Psoas muscle (tissue), 8 donors: ENCODE measurements at regions of chr1 and their contacts with region 1.

Region 1: DNA sequence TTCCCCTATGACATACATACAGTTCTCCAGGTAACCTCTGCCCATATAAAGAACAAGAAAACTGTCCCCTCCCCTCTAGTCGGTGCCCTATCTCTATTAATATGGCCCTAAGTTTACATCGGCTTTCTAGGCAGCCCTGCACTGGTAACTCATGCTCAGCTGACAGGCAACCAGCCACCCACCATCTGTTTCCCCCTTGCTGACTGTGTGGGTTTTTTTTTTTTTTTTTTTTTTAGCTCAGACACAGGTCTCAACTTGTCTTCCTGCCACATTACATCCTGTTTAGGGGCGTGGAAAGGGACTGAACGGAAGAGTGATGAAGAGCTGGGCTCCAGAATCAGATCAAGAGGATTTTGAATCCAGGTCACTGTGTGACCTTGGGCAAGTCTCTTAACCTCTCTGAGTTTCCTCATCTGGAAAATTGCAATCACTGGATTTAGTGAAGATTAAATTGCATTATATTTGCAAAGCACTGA is 14.0 kb downstream of the LAPTM5 start:
- DNase-seq: no peak
- ATAC-seq: peak in 1 of 4 donors; percentile 27
- H3K4me3 ChIP-seq: no peak overlapping the region
- H3K27ac ChIP-seq: no peak overlapping the region
- H3K4me1 ChIP-seq: no peaks in the 10 kb centered on the region
- H3K27me3 ChIP-seq: no peaks in the 10 kb centered on the region
- CTCF ChIP-seq: no peak

Region 2: GRCh38 chr1:30763651-30764248 is 20.1 kb after region 1 on chr1:
- intact Hi-C with region 1: loop called in 1 of 2 experiments (anchors 2 kb)
- DNase-seq: peak in 1 of 2 donors; percentile 78
- ATAC-seq: peak; percentile 83 to 92 (median 88)
- H3K4me3 ChIP-seq: no peak overlapping the region
- H3K27ac ChIP-seq: peak overlapping the region; percentile 71
- H3K4me1 ChIP-seq: peaks cover 10% of the 10 kb centered on the region
- H3K27me3 ChIP-seq: no peaks in the 10 kb centered on the region
- CTCF ChIP-seq: no peak